ENCODE measurements at regions of chr6 and their contacts with region 1.

Region 1: DNA sequence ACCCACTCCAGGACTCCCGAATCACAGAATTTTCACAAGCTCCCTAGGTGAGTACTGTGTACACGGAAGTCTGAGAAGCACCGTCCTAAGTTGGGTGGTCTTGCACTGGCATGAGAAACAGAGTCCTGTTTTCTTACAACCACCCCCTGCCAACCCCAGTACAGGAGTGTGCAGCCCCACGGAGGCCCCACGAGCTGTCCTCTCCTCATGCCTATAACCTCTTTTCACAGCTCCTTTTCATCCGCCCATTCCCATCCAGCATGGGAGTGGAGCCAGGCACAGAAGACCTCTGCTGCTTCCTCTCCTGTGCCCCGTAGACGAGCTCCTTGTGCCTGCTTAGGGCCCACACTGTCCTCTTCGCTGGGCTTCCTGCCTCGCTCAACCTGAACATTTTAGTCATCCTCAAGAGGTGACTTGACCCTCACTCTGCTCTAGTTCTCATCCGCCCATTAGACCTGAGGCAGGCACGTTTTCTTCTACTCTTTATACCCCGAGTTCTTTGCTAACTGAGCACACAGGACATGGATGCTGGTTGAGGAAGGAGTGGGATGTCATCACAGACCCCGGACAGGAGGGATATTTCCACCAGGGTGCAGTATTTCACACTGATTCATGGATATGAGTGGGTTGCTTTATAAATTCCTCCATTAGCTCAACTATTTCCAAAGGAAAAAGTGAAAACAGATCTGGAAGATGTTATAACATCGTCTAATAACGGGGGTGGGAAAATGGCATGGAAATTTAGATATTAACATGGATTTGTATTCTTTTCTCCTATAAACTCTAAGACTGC is 160.5 kb downstream of the TTLL2 start:
- DNase-seq: no peak
- ATAC-seq: peak in 3 of 4 donors; percentile 59 to 70 (median 68)
- H3K4me3 ChIP-seq: no peak overlapping the region
- H3K27ac ChIP-seq: no peak overlapping the region
- H3K4me1 ChIP-seq: no peaks in the 10 kb centered on the region
- H3K27me3 ChIP-seq: peaks cover 0 to 1% (median 1%) of the 10 kb centered on the region in 3 donors
- CTCF ChIP-seq: peak; percentile 52

Region 2: GRCh38 chr6:166244353-166245045 is 1240.9 kb before region 1 on chr6:
- intact Hi-C with region 1: no loop called
- DNase-seq: no peak
- ATAC-seq: no peak
- H3K4me3 ChIP-seq: no peak overlapping the region
- H3K27ac ChIP-seq: no peak overlapping the region
- H3K4me1 ChIP-seq: no peaks in the 10 kb centered on the region
- H3K27me3 ChIP-seq: peaks cover 3 to 39% (median 6%) of the 10 kb centered on the region in 3 donors
- CTCF ChIP-seq: no peak

Region 3: DNA sequence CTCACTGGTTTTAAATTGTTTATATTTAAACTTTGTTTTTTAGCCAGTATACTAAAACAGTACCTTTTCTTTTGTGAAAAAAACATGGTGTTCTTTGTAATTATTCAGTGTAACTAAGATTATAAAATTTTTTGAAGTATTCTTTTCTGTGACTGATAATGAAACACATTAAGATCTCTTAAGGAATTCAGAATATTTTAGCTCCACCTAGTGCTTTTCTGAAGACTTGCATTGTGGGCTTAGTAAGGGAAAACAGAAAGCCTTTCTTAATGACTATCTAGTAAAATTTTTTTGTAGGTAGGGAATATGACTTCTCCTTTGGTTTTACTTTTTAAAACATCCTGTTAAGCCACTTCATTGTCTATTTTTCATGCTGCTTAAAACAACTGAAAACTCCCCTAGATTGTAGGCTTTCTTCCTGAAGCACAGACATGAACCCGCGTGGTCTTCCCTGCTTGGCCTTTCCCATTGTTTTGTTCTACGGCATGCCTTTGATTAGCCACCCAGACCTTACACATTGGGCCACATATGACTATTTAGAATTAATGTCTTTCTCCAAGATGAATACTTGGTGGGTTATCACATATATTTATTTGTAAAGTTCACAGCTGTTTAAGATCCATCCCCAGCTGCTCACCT is 413.4 kb after region 1 on chr6:
- intact Hi-C with region 1: loop called (anchors 1 to 5 kb)
- DNase-seq: no peak
- ATAC-seq: peak in 1 of 4 donors; percentile 60
- H3K4me3 ChIP-seq: no peak overlapping the region
- H3K27ac ChIP-seq: no peak overlapping the region
- H3K4me1 ChIP-seq: no peaks in the 10 kb centered on the region
- H3K27me3 ChIP-seq: no peaks in the 10 kb centered on the region
- CTCF ChIP-seq: peak; percentile 73